A673 (cell line): ENCODE measurements at regions of chr2 and their contacts with region 1.

Region 1: GRCh38 chr2:122112216-122113005 is 357.0 kb downstream of the TSN start:
- DNase-seq: no peak
- H3K4me3 ChIP-seq: no peak overlapping the region
- H3K27ac ChIP-seq: no peak overlapping the region
- H3K4me1 ChIP-seq: peaks cover 35% of the 10 kb centered on the region
- H3K27me3 ChIP-seq: no peaks in the 10 kb centered on the region
- CTCF ChIP-seq: no peak

Region 2: DNA sequence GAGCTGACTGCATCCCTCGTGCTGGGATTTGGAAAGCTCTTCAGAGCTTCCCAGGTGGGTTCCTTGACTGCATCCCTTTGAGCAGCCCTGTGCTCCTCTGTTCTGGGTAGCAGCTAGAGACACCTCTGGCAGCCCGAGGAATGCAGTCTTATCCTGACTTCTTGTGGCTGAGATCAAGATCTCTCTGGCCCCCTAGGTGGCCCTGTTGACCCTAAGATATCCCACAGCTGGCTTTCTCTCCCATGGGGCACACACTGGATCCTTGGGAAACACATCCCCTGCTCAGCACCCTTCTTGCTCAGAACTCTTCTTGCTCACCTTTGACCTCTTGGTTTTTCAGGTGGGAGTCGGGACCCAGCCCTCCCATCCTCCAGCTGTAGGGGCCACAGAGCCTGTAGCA is 119.7 kb before region 1 on chr2:
- CTCF ChIA-PET with region 1: no interaction called
- POLR2A ChIA-PET with region 1: interaction called, 16 read pairs
- intact Hi-C with region 1: no loop called
- DNase-seq: no peak
- H3K4me3 ChIP-seq: no peak overlapping the region
- H3K27ac ChIP-seq: no peak overlapping the region
- H3K4me1 ChIP-seq: peaks cover 4% of the 10 kb centered on the region
- H3K27me3 ChIP-seq: no peaks in the 10 kb centered on the region
- CTCF ChIP-seq: no peak

Region 3: DNA sequence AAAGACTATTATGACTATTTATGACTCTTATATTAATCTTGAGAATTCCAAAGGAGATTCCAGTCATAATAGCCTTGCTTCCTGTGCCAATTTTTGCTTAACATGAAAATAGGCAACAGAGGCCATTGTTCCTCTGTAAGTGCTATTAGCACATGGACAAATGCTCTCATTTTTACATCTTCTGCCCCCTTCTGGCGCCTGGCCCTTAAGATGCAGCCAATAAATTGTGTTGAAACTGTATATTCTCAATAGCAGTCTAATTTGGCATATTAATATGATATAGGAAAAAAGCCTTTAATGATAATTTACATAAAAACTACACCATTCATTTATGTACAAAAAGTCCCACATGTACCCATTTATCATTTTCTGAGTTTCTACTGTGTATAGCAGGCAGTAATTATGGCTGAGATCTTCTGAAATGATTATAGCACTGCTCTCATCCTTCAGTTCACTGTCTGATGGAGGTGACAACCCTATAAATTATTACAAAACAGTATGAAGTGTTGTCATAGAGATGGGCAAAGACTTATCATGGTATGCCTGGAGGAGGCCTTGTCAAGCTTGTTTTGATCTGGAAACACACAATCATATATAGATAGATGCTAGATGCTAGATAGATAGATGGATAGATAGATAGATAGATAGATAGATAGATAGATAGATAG is 256.3 kb after region 1 on chr2:
- CTCF ChIA-PET with region 1: no interaction called
- POLR2A ChIA-PET with region 1: no interaction called
- intact Hi-C with region 1: no loop called
- DNase-seq: peak; percentile 45
- H3K4me3 ChIP-seq: no peak overlapping the region
- H3K27ac ChIP-seq: no peak overlapping the region
- H3K4me1 ChIP-seq: peaks cover 8% of the 10 kb centered on the region
- H3K27me3 ChIP-seq: no peaks in the 10 kb centered on the region
- CTCF ChIP-seq: peak; percentile 52